Mammary epithelial cell (primary cell): ENCODE measurements at regions of chrX and their contacts with region 1.

Region 1: DNA sequence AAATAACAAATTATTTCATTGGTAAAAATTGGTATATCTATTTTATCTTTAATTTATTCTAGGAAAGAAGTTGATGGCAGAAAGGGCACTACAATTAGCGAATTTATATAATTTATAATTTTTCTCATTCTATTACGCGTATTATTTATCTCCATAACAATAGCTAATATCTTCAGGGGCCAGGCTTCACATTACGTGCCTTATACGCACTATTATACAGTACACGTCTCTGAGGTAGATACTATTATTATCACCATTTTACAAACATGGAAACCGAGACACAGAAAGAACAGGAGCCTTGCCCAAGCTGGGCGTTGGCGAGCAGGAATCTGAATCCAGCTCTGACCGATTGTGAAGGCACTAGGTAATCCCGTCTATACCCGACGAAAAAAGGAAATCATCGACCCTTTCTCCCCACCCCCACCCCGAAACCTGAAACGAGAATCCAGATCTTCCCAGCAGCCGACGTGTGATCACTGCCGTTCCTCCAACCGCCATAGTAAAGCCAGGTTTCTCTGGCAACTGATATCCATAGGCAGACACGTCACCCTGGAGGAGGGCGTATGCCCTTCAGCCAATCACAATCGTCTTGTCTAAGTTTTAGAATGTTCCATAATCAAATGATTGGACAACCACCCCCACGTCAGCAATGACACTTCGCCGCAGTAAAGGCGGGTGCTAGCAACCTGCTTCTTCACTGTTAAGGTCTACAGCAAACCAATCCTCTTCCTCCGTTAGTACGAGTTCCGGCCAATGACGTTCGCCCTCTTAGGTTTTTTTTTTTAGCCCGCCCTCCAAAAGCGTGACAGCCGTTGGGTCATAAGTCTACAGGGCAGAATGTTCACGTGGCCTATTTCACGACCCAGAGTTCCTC is at the start of gene MORF4L2:
- DNase-seq: peak; percentile 97
- H3K4me3 ChIP-seq: peak within 1 kb of the TSS; percentile 55 to 83 (median 70)
- H3K27ac ChIP-seq: peak within 1 kb of the TSS; percentile 95
- H3K4me1 ChIP-seq: peaks cover 11% of the 10 kb centered on the region
- H3K27me3 ChIP-seq: no peaks in the 10 kb centered on the region
- CTCF ChIP-seq: no peak
- total RNA-seq, gene MORF4L2: 465 to 771 TPM

Region 2: GRCh38 chrX:103533511-103534216 is 152.8 kb before region 1 on chrX:
- CTCF ChIA-PET with region 1: no interaction called
- dilution Hi-C with region 1: no loop called
- in situ Hi-C with region 1: loop called (anchors 10 kb)
- intact Hi-C with region 1: loop called (anchors 1 kb)
- DNase-seq: peak; percentile 55
- H3K4me3 ChIP-seq: peak overlapping the region; percentile 4 to 22 (median 16)
- H3K27ac ChIP-seq: no peak overlapping the region
- H3K4me1 ChIP-seq: peaks cover 24% of the 10 kb centered on the region
- H3K27me3 ChIP-seq: no peaks in the 10 kb centered on the region
- CTCF ChIP-seq: peak; percentile 80 to 90

Region 3: GRCh38 chrX:103607364-103608305 is 78.8 kb before region 1 on chrX and contains the start of gene TCEAL3:
- CTCF ChIA-PET with region 1: no interaction called
- dilution Hi-C with region 1: no loop called
- in situ Hi-C with region 1: no loop called
- intact Hi-C with region 1: loop called (anchors 5 kb)
- DNase-seq: no peak
- H3K4me3 ChIP-seq: peak within 1 kb of the TSS; percentile 69
- H3K27ac ChIP-seq: peak within 1 kb of the TSS; percentile 59
- H3K4me1 ChIP-seq: no peaks in the 10 kb centered on the region
- H3K27me3 ChIP-seq: no peaks in the 10 kb centered on the region
- CTCF ChIP-seq: no peak
- total RNA-seq, gene TCEAL3: 9.3 to 41.2 TPM

Region 4: GRCh38 chrX:103711533-103712369 is 25.3 kb after region 1 on chrX:
- CTCF ChIA-PET with region 1: no interaction called
- dilution Hi-C with region 1: no loop called
- in situ Hi-C with region 1: no loop called
- intact Hi-C with region 1: loop called (anchors 1 kb)
- DNase-seq: peak; percentile 39
- H3K4me3 ChIP-seq: no peak overlapping the region
- H3K27ac ChIP-seq: no peak overlapping the region
- H3K4me1 ChIP-seq: peaks cover 3% of the 10 kb centered on the region
- H3K27me3 ChIP-seq: peaks cover 2% of the 10 kb centered on the region
- CTCF ChIP-seq: peak; percentile 72 to 73

Region 5: DNA sequence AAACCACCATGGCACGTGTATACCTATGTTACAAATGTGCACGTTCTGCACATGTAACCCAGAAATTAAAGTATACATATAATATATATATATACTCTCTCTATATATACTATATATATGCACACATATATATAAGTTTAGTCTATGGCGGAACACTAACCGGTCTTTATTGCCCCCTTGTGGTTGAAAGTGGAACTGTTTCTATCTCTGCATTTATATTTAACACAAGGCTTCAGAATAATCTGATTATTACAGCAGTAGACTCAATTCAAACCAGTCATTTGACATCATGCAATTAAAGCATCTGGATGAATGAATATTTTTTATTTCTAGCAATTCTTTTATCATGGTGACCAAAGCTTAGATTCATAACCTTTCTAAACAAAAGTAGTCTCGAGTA is 131.1 kb after region 1 on chrX:
- CTCF ChIA-PET with region 1: no interaction called
- dilution Hi-C with region 1: no loop called
- in situ Hi-C with region 1: no loop called
- intact Hi-C with region 1: loop called (anchors 1 kb)
- DNase-seq: no peak
- H3K4me3 ChIP-seq: no peak overlapping the region
- H3K27ac ChIP-seq: no peak overlapping the region
- H3K4me1 ChIP-seq: no peaks in the 10 kb centered on the region
- H3K27me3 ChIP-seq: no peaks in the 10 kb centered on the region
- CTCF ChIP-seq: peak; percentile 55 to 64

Region 6: GRCh38 chrX:104113222-104113965 is 427.0 kb after region 1 on chrX:
- CTCF ChIA-PET with region 1: no interaction called
- dilution Hi-C with region 1: no loop called
- in situ Hi-C with region 1: no loop called
- intact Hi-C with region 1: loop called (anchors 2 kb)
- DNase-seq: peak; percentile 53
- H3K4me3 ChIP-seq: peak overlapping the region; percentile 30 to 67 (median 63)
- H3K27ac ChIP-seq: no peak overlapping the region
- H3K4me1 ChIP-seq: no peaks in the 10 kb centered on the region
- H3K27me3 ChIP-seq: no peaks in the 10 kb centered on the region
- CTCF ChIP-seq: peak; percentile 42 to 61